Mucosa of descending colon (tissue), 3 donors: ENCODE measurements at regions of chr5 and their contacts with region 1.

Region 1: DNA sequence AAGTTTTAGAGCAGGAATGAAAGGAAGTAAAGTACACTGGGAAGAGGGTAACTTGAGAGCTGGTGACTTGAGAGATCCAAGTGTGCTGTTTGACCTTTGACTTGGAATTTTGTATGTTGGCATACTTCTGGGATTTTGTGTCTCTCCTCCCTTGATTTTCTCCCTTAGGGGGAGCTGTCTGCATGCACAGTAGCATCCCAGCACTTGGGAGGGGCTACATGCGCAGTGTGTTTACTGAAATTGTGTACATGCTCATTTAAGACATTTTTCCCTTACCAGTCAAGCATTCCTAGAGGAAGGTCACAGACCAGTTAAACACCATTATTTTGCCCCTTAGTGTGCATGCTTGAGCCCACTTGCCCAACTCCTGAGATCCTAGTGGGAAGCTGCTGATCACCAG is 120.1 kb downstream of the ZNF622 start:
- DNase-seq: peak in 1 of 3 donors; percentile 17
- ATAC-seq: peak; percentile 15
- H3K4me3 ChIP-seq: no peak overlapping the region
- H3K4me1 ChIP-seq: no peaks in the 10 kb centered on the region
- CTCF ChIP-seq: no peak

Region 2: DNA sequence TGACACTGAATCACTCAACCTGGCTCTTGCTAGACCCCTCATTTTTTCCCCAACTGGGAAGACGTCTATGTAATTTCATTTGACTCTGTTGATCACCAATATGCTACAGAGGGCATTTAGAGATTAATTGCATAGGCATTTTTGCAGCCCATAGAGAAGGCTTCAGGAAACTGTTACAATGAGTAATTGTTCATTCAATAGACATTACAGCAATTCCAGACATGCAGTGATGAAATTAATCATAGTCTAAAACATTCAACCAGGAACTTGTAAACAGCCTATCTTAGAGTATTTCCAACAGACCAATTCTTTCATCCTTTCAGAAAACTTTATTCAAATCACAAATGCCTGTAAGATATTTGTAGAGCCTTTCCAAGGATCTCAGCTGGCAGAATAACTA is 288.2 kb before region 1 on chr5:
- intact Hi-C with region 1: no loop called
- DNase-seq: no peak
- ATAC-seq: no peak
- H3K4me3 ChIP-seq: no peak overlapping the region
- H3K4me1 ChIP-seq: no peaks in the 10 kb centered on the region
- CTCF ChIP-seq: no peak

Region 3: GRCh38 chr5:16160706-16161105 is 184.7 kb before region 1 on chr5:
- intact Hi-C with region 1: no loop called
- DNase-seq: peak in 1 of 3 donors; percentile 44
- ATAC-seq: peak; percentile 86
- H3K4me3 ChIP-seq: no peak overlapping the region
- H3K4me1 ChIP-seq: no peaks in the 10 kb centered on the region
- CTCF ChIP-seq: no peak

Region 4: DNA sequence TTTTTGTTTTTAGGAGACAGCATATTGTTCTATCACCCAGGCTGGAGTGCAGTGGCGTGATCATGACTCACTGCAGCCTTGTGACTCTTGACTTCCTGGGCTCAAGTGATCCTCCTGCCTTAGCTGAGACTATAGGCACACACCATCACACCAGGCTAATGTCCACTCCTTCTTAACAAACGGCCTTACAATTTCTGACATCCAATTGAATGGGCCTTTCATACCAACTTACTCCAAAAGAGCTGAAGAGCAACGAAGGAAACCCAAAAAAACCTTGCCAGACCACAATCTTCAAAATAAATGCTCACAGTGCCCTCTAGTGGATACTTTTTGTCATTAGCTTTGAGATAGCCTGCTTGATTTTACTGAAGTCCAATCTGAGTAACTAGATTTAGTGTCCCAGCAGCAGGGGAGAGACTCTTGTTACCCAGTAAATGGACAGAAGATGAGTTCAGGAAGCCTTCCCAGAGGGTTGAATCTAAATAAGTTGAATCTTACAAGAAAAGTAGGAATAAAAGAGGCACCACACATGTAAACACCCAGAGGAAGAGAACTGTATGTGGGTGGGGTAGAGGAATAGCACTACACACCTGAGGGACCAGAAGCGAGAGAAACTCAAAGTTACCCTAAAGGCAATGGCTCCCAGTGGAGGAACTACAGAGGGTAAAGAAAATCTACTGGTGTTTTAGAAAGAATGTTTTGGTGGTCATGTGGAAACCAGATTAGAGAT is 110.8 kb after region 1 on chr5:
- intact Hi-C with region 1: loop called in 1 of 2 experiments (anchors 10 kb)
- DNase-seq: peak in 1 of 3 donors; percentile 42
- ATAC-seq: peak; percentile 80
- H3K4me3 ChIP-seq: no peak overlapping the region
- H3K4me1 ChIP-seq: no peaks in the 10 kb centered on the region
- CTCF ChIP-seq: peak; percentile 33

Region 5: GRCh38 chr5:16489322-16489791 is 143.9 kb after region 1 on chr5:
- intact Hi-C with region 1: no loop called
- DNase-seq: peak in 1 of 3 donors; percentile 50
- ATAC-seq: peak; percentile 58
- H3K4me3 ChIP-seq: no peak overlapping the region
- H3K4me1 ChIP-seq: peaks cover 38% of the 10 kb centered on the region
- CTCF ChIP-seq: no peak

Region 6: DNA sequence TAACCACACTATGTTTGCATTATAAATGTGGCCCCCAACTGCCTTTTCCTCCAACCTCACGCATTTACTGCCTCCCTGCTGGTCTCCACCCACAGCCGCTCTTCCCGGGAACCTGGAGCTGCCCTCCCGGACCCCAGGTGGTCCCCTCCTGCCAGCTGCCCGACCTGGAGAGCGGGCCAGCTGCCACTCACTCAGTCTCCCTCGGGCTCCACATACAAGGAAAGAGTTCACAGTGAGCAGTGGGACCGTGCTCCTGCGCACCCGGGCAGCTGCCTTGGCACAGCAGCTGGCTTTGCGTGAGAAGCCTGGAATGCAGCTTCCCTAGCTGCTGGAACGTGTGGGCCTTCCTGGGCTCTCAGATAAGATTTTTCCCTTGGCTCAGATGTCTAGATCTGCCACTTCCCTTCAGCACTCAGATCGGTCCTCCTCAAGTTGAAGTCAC is 521.4 kb after region 1 on chr5:
- intact Hi-C with region 1: no loop called
- DNase-seq: peak in 2 of 3 donors; percentile 59 to 60
- ATAC-seq: peak; percentile 82
- H3K4me3 ChIP-seq: no peak overlapping the region
- H3K4me1 ChIP-seq: peaks cover 24% of the 10 kb centered on the region
- CTCF ChIP-seq: no peak